ENCODE measurements at regions of chr14 and their contacts with region 1.

Region 1: DNA sequence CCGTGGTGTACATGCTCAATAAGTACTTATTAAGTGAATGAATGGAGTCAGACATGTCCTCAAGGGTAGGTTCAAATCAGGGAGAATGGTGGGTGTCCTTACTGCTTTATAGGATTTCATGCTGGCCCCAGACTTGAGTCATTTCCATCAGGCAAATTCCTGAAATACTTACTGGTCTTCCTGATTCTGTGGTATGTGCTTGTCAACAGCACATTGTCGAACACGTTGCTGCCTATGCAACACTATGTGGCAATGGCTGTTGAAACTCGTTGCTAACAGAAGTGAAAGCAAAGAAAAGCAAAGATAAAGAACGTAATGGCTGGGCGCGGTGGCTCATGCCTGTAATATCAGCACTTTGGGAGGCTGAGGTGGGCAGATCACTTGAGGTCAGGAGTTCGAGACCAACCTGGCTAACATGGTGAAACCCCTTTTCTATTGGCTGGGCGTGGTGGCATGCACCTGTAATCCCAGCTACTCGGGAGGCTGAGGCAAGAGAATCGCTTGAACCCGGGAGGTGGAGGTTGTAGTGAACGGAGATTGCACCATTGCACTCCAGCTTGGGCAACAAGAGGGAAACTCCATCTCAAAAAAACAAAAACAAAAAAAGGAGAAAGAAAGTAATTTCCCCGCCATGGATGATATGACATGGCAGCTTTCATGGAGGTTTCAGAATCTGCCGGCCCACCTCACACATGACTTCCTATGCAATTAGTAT is 214.9 kb downstream of the ZFP36L1 start:
- DNase-seq: peak; percentile 84 to 99
- H3K4me3 ChIP-seq: peak overlapping the region; percentile 19; the same call in 1 of the 2 replicates
- H3K27ac ChIP-seq: peak overlapping the region; percentile 93
- H3K4me1 ChIP-seq: peaks cover 54% of the 10 kb centered on the region
- H3K27me3 ChIP-seq: no peaks in the 10 kb centered on the region
- CTCF ChIP-seq: no peak

Region 2: DNA sequence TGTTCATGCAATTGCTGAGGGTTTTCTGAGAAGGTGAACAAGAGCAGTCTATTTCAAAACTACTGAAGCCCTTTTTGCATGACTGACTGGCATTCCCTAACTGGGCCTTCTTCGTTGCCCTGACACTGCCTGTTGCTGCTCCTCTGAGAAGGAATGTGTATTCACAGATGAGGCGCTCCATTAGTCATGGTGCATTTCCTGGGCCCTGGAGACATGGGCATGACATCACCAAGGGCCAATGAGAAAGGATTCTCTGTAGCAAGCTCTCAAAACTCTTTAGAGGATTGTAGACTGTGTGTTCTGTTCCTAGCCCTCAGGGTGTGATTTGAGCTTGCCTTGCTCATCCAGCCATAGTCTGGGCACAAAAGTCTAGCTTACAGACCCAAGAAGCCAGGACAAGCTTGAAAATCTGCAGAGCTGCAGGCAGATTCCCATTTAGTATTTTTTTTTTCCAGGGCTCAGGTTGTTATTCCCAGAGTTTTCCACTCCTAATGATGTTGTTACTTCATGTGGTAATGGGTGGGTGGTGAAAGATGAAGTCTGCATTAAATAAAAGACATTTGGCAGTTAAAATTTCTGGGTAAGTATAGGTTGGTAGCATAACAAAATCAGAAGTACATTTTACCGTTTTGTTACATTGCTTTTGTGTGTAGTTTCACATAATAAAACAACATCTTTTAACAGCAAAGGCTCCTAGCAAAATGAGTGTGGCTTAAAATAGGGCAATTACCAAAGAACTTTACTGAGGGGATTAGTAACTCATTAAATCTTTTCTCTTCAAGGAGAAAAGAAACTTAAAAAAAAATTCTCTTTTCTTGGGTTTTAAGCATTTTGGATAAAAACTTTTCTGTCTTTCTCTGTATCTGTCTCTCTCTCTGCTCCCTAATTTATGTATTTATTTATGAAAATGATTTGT is 440.0 kb before region 1 on chr14:
- CTCF ChIA-PET with region 1: no interaction called
- POLR2A ChIA-PET with region 1: no interaction called
- intact Hi-C with region 1: loop called (anchors 2 kb)
- DNase-seq: peak; percentile 88 to 92
- H3K4me3 ChIP-seq: no peak overlapping the region
- H3K27ac ChIP-seq: peak overlapping the region; percentile 57
- H3K4me1 ChIP-seq: peaks cover 58% of the 10 kb centered on the region
- H3K27me3 ChIP-seq: no peaks in the 10 kb centered on the region
- CTCF ChIP-seq: no peak

Region 3: GRCh38 chr14:68458840-68459469 is 119.0 kb before region 1 on chr14:
- CTCF ChIA-PET with region 1: no interaction called
- POLR2A ChIA-PET with region 1: interaction called, 13 read pairs
- intact Hi-C with region 1: loop called (anchors 1 kb)
- DNase-seq: peak; percentile 85 to 97
- H3K4me3 ChIP-seq: peak overlapping the region; percentile 25; the same call in 1 of the 2 replicates
- H3K27ac ChIP-seq: peak overlapping the region; percentile 93
- H3K4me1 ChIP-seq: peaks cover 77% of the 10 kb centered on the region
- H3K27me3 ChIP-seq: no peaks in the 10 kb centered on the region
- CTCF ChIP-seq: no peak

Region 4: DNA sequence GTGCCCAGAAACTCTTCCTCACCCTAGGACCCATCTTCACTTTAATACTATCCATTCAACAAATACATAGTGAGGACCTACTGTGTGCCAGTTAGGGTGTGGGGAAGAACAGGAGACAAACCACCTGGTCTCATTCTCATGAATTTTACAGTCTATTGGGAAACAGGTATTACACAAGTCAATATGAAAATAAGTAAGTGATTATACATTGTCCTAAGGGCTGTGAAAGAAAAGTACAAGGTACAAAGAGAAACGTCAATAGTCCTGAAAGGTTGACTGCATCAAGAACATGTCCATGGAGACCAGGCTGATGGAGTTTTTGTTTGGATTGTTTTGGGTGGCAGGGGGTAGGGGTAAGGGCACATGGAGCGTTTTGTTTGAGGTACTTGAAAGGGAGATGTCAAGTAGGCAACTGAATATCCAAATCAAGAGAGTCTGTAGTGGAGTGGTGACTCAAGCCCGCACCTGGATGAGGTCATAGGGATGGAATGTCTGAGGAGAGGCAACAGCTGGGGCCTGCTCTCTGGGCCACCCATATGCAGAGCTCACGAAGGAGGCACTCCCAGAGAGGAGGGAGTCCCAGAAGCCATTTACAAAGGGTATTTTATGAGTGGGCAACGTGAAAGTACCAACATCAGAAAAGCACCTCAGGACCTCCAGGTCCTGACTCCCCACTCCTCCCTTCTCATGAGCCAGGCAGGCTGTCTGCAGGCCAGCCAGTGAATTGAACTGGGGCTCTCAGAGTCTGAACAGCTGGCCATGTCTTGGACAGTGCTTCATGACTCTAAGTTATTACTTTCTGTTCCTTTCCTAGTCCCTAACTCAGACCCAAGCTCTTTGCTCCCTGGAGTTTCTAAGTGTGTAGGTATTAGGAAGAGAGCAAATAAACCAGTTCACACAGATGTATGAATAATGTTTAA is 57.1 kb before region 1 on chr14:
- CTCF ChIA-PET with region 1: no interaction called
- POLR2A ChIA-PET with region 1: interaction called, 4 read pairs
- intact Hi-C with region 1: loop called (anchors 1 kb)
- DNase-seq: peak; percentile 86 to 91
- H3K4me3 ChIP-seq: no peak overlapping the region
- H3K27ac ChIP-seq: peak overlapping the region; percentile 69
- H3K4me1 ChIP-seq: peaks cover 52% of the 10 kb centered on the region
- H3K27me3 ChIP-seq: no peaks in the 10 kb centered on the region
- CTCF ChIP-seq: no peak

Region 5: GRCh38 chr14:68627880-68628607 is 50.1 kb after region 1 on chr14:
- CTCF ChIA-PET with region 1: no interaction called
- POLR2A ChIA-PET with region 1: interaction called, 3 read pairs
- intact Hi-C with region 1: loop called (anchors 1 kb)
- DNase-seq: peak; percentile 72 to 81
- H3K4me3 ChIP-seq: peak overlapping the region; percentile 60
- H3K27ac ChIP-seq: peak overlapping the region; percentile 92
- H3K4me1 ChIP-seq: peaks cover 45% of the 10 kb centered on the region
- H3K27me3 ChIP-seq: no peaks in the 10 kb centered on the region
- CTCF ChIP-seq: no peak

Region 6: DNA sequence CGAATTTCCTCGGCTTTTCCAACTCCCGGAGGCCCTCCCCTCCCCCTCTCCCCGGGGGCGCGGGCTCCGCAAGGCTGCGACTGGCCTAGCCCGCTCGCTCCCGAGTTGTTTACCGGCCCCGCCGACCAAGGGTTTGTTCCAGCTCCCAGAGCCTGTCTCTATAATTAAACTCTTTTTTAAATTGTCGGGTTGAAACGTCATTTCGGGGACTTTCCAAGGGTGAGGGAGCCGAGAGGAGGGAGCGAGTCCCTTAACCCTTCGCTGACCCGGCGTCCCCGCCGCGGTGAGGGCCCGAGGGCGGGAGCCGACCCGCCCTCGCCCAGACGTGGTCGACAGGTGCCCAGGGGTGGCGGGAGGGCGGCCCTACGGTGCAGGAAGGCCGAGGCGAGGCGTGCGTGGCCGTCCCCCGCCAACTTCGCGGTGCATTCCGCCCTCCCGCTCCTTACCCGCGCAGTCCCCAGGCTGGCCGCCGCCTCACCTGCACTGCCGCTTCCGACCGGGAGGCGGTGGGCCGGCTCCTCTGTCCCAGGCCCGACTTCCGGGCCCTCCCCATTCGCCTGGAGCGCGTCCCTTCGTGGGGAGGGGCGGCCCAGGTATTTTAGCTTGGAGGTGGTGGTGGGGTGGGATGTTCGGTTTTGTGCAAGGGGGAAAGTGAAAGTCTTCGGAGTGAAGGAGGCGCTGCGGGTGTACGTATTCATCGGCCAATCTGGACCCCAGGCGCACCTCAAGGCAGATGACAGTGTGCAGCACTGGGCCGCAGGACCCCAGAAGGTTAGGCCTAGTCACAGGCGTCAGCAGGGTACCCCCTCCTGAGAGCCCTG is 217.8 kb after region 1 on chr14:
- CTCF ChIA-PET with region 1: no interaction called
- POLR2A ChIA-PET with region 1: interaction called, 14 read pairs
- intact Hi-C with region 1: loop called (anchors 1 kb)
- DNase-seq: peak; percentile 72 to 90
- H3K4me3 ChIP-seq: peak overlapping the region; percentile 95
- H3K27ac ChIP-seq: peak overlapping the region; percentile 98
- H3K4me1 ChIP-seq: peaks cover 24% of the 10 kb centered on the region
- H3K27me3 ChIP-seq: no peaks in the 10 kb centered on the region
- CTCF ChIP-seq: peak; percentile 82